ENCODE measurements at regions of chr12 and their contacts with region 1.

Region 1: DNA sequence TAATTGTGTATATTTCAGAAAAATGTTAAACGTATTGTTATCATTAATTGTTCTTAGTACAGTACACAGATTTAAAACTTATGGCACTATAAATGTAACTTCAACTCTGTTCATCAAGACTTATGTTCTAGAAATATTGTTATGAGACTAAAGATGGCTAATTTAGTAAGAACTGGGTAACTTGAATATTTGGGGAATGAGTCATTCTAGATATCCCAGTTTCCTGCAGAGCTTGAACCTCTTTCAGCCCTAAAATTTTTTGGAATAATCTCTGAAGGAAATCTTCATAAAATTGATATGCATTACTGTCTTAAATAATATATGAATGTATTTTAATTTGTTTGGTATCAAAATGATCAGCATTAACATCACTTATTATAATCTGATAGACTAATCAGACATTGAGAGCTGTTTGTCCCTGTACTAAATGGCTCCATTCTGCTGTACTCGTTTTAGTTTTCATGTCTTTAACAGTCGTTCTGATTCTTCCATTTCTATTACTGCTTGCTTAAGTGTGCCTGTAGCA is 87.1 kb downstream of the VEZT start:
- DNase-seq: no peak
- ATAC-seq: no peak
- H3K4me3 ChIP-seq: no peak overlapping the region
- H3K4me3 Mint-ChIP-seq: no peak overlapping the region
- H3K27ac ChIP-seq: no peak overlapping the region
- H3K27ac Mint-ChIP-seq: no peak overlapping the region
- H3K4me1 ChIP-seq: no peaks in the 10 kb centered on the region
- H3K4me1 Mint-ChIP-seq: no peaks in the 10 kb centered on the region
- H3K27me3 ChIP-seq: no peaks in the 10 kb centered on the region
- H3K27me3 Mint-ChIP-seq: no peaks in the 10 kb centered on the region
- CTCF ChIP-seq: no peak

Region 2: GRCh38 chr12:95231190-95231589 is 73.5 kb before region 1 on chr12:
- CTCF ChIA-PET with region 1: no interaction called
- POLR2A ChIA-PET with region 1: no interaction called
- intact Hi-C with region 1: loop called in 1 of 2 experiments (anchors 2 kb)
- DNase-seq: no peak
- ATAC-seq: no peak
- H3K4me3 ChIP-seq: no peak overlapping the region
- H3K4me3 Mint-ChIP-seq: no peak overlapping the region
- H3K27ac ChIP-seq: no peak overlapping the region
- H3K27ac Mint-ChIP-seq: no peak overlapping the region
- H3K4me1 ChIP-seq: no peaks in the 10 kb centered on the region
- H3K4me1 Mint-ChIP-seq: peaks cover 39% of the 10 kb centered on the region
- H3K27me3 ChIP-seq: no peaks in the 10 kb centered on the region
- H3K27me3 Mint-ChIP-seq: no peaks in the 10 kb centered on the region
- CTCF ChIP-seq: no peak

Region 3: DNA sequence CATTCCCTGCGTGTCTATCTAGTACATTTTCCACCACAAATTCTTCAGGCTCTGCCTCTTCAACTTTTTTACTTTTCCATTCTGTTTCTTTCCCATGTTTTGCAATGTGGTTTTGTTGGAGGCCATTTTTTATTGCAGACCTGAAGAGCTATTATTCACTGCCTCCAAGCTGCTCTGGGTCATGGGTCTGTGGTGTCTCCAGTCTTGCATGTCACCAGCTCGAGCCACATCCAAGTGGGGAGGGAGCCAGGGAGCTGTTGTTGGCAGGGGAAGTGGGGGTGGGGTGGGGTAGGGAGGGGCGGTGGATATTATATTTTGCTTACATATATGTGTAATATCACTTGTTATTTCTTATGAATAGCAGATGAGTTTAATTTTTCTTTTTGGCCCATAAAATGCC is 18.0 kb before region 1 on chr12:
- CTCF ChIA-PET with region 1: no interaction called
- POLR2A ChIA-PET with region 1: no interaction called
- intact Hi-C with region 1: loop called in 1 of 2 experiments (anchors 2 kb)
- DNase-seq: no peak
- ATAC-seq: no peak
- H3K4me3 ChIP-seq: no peak overlapping the region
- H3K4me3 Mint-ChIP-seq: no peak overlapping the region
- H3K27ac ChIP-seq: no peak overlapping the region
- H3K27ac Mint-ChIP-seq: no peak overlapping the region
- H3K4me1 ChIP-seq: no peaks in the 10 kb centered on the region
- H3K4me1 Mint-ChIP-seq: no peaks in the 10 kb centered on the region
- H3K27me3 ChIP-seq: no peaks in the 10 kb centered on the region
- H3K27me3 Mint-ChIP-seq: no peaks in the 10 kb centered on the region
- CTCF ChIP-seq: no peak

Region 4: DNA sequence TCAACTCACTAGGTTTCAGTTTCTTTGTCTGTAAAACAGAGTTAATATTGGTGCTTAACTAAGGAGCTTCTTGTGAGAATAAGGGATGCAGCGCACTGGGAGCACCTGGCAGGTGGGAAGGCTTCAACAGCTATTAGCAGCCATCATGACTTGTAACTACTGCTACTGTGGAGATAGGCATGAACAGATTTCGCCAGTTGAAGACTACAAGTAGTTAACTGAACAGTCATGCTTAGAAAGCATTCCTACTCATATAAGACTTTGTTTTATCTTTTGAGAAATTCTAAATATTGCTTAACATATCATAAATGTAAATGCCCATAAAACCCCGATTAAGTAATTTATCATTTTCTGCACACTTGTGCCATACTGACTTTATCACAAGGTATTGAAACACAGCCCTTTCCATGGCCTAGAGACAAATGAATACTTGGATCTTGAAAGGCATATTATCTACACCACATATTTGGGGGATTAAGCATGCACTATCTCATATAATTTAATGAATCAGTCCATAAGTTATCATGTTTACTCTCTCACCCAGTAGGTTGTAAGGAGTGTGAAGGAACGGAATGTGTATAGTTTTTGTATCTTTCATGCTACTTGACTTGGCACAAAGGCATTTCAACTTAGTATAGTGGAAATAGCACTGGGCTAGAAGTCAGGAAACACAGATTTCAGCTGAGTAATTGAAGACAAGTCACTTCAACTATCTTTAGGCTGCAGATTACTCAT is 469.7 kb after region 1 on chr12:
- CTCF ChIA-PET with region 1: no interaction called
- POLR2A ChIA-PET with region 1: no interaction called
- intact Hi-C with region 1: loop called in 1 of 2 experiments (anchors 5 kb)
- DNase-seq: no peak
- ATAC-seq: no peak
- H3K4me3 ChIP-seq: no peak overlapping the region
- H3K4me3 Mint-ChIP-seq: no peak overlapping the region
- H3K27ac ChIP-seq: no peak overlapping the region
- H3K27ac Mint-ChIP-seq: no peak overlapping the region
- H3K4me1 ChIP-seq: no peaks in the 10 kb centered on the region
- H3K4me1 Mint-ChIP-seq: no peaks in the 10 kb centered on the region
- H3K27me3 ChIP-seq: no peaks in the 10 kb centered on the region
- H3K27me3 Mint-ChIP-seq: peaks cover 24% of the 10 kb centered on the region
- CTCF ChIP-seq: no peak